Left colon (tissue), 2 donors: ENCODE measurements at regions of chr3 and their contacts with region 1.

Region 1: GRCh38 chr3:124467980-124468902 is 262.0 kb upstream of the UMPS start:
- DNase-seq: peak in 1 of 2 donors; percentile 47
- ATAC-seq: peak; percentile 93

Region 2: DNA sequence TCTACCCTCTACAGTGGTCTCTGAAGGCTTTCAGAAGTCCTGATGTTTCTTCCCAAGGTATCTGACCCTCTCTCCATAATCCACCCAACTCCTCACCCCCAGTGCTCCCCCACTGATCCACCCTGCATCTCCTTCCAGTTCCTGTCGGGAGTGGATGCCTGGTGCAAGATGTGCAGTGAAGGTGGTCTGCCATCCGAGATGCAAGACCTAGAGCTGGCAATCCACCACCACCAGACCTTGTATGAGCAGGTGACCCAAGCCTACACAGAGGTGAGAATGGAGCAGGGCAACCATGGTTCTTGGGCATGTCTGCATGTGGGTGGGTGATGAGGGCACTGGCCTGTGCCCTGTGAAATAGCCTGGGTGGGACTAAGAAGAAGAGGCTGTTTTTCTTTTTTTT is 138.5 kb before region 1 on chr3:
- intact Hi-C with region 1: no loop called
- DNase-seq: no peak
- ATAC-seq: no peak

Region 3: DNA sequence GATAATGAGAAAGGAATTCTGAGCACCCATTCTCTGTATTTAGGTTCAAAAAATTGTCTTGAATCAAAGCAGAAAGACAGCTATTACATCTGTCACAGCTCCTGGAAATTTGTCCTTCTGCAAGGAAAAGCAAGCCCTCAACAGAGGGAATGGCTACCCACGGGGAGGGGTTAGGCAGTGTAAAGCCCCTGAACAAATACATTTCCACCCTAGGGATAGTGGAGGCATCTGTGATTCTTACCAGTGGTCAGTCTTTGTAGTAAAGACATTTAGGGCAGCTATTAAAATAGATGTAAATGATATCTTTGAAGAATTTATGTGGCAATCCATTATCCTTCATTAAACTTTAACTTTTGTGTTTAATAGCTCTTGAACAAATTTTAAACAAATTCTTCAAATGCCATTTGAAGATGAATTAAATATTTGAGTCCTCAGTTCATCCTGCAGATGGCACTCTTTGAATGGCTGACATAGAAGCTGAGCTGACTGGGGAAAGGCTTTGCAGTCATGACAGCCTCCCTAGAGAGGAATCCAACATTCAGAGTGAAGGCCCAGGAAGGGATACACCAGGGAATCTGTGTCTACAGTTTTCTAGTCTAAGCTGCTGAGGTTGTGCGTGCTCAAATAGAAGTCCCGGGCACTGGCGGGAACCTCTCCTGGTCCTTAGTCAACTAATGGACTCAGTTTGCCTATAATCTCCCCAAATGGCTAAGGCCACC is 116.7 kb before region 1 on chr3:
- intact Hi-C with region 1: loop called in 1 of 2 experiments (anchors 10 kb)
- DNase-seq: peak in 1 of 2 donors; percentile 9
- ATAC-seq: peak; percentile 86